Activated CD4-positive, alpha-beta T cell treated with anti-CD3 and anti-CD28 coated beads for 36 hours (primary cell): ENCODE measurements at regions of chr5 and their contacts with region 1.

Region 1: DNA sequence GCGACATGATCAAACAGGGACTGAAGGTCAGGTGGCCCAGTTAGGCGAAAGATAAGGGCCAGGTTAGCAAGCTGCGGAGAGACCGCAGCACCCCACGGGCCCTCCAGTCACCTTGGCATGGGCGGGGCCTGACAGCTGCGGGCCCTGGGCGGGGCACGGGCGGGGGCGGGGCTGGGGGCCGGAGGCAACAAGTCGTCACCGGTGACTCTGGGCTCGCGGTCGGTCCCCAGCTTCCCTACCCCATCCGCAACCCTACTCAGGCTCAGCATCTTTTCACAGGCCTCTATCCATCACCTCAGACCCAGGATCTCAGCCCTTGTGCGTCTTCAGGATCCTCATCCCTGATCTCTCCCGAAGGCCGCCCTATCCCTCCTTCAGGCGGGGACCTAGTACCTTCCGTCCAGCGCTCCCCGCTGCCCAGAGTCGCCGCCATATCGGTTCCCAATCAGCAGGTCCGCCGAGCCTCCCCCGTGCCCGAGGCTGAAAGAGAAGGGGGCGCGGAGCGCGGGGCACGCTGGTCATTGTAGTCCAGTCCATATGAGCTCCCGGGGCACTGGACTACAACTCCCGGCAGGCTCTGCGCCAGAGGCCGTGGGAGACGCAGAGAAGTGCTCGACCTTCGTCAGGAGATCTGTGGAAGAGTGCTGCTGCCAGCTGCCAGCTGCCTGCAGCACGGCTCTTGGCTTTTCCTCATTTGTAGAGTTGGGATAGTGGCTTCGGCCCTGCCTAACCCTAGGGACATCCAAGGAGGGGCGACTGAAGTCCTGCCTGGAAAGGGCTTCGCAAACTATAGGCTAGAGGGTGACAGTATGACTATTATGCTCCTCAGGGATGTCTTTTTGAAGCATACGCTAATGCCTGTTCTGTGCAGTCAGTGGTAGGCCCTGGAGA is at the start of gene DNAJC18:
- DNase-seq: peak; percentile 97
- ATAC-seq: peak; percentile 86
- H3K4me3 Mint-ChIP-seq: peak within 1 kb of the TSS; percentile 94
- H3K27ac Mint-ChIP-seq: peak within 1 kb of the TSS; percentile 99
- H3K4me1 Mint-ChIP-seq: peaks cover 55% of the 10 kb centered on the region
- H3K27me3 Mint-ChIP-seq: no peaks in the 10 kb centered on the region
- total RNA-seq, gene DNAJC18: 33.1 to 35.6 TPM

Region 2: GRCh38 chr5:139354186-139354585 is 85.1 kb before region 1 on chr5:
- CTCF ChIA-PET with region 1: no interaction called
- POLR2A ChIA-PET with region 1: no interaction called
- intact Hi-C with region 1: no loop called
- DNase-seq: no peak
- ATAC-seq: no peak
- H3K4me3 Mint-ChIP-seq: no peak overlapping the region
- H3K27ac Mint-ChIP-seq: no peak overlapping the region
- H3K4me1 Mint-ChIP-seq: peaks cover 28% of the 10 kb centered on the region
- H3K27me3 Mint-ChIP-seq: no peaks in the 10 kb centered on the region

Region 3: GRCh38 chr5:139392678-139393496 is 46.4 kb before region 1 on chr5:
- CTCF ChIA-PET with region 1: no interaction called
- POLR2A ChIA-PET with region 1: no interaction called
- intact Hi-C with region 1: loop called in 1 of 2 experiments (anchors 1 kb)
- DNase-seq: peak; percentile 93
- ATAC-seq: peak; percentile 67
- H3K4me3 Mint-ChIP-seq: peak overlapping the region; percentile 78
- H3K27ac Mint-ChIP-seq: peak overlapping the region; percentile 85
- H3K4me1 Mint-ChIP-seq: peaks cover 40% of the 10 kb centered on the region
- H3K27me3 Mint-ChIP-seq: no peaks in the 10 kb centered on the region

Region 4: GRCh38 chr5:139417214-139417613 is 22.0 kb before region 1 on chr5:
- CTCF ChIA-PET with region 1: interaction called, 18 read pairs
- POLR2A ChIA-PET with region 1: interaction called, 7 read pairs
- intact Hi-C with region 1: loop called in 1 of 2 experiments (anchors 1 kb)
- DNase-seq: no peak
- ATAC-seq: no peak
- H3K4me3 Mint-ChIP-seq: no peak overlapping the region
- H3K27ac Mint-ChIP-seq: peak overlapping the region; percentile 98
- H3K4me1 Mint-ChIP-seq: peaks cover 50% of the 10 kb centered on the region
- H3K27me3 Mint-ChIP-seq: no peaks in the 10 kb centered on the region

Region 5: GRCh38 chr5:139458580-139459406 is 19.5 kb after region 1 on chr5:
- CTCF ChIA-PET with region 1: interaction called, 4 read pairs
- POLR2A ChIA-PET with region 1: interaction called, 18 read pairs
- intact Hi-C with region 1: loop called (anchors 1 kb)
- DNase-seq: peak; percentile 90
- ATAC-seq: peak; percentile 91
- H3K4me3 Mint-ChIP-seq: peak overlapping the region; percentile 57
- H3K27ac Mint-ChIP-seq: peak overlapping the region; percentile 94
- H3K4me1 Mint-ChIP-seq: peaks cover 64% of the 10 kb centered on the region
- H3K27me3 Mint-ChIP-seq: no peaks in the 10 kb centered on the region

Region 6: GRCh38 chr5:139512786-139513390 is 73.6 kb after region 1 on chr5:
- CTCF ChIA-PET with region 1: interaction called, 21 read pairs
- POLR2A ChIA-PET with region 1: no interaction called
- intact Hi-C with region 1: loop called in 1 of 2 experiments (anchors 1 kb)
- DNase-seq: peak; percentile 15
- ATAC-seq: no peak
- H3K4me3 Mint-ChIP-seq: no peak overlapping the region
- H3K27ac Mint-ChIP-seq: peak overlapping the region; percentile 16
- H3K4me1 Mint-ChIP-seq: peaks cover 55% of the 10 kb centered on the region
- H3K27me3 Mint-ChIP-seq: no peaks in the 10 kb centered on the region

Region 7: GRCh38 chr5:139574641-139575312 is 135.5 kb after region 1 on chr5:
- CTCF ChIA-PET with region 1: no interaction called
- POLR2A ChIA-PET with region 1: no interaction called
- intact Hi-C with region 1: loop called in 1 of 2 experiments (anchors 5 kb)
- DNase-seq: no peak
- ATAC-seq: peak; percentile 23
- H3K4me3 Mint-ChIP-seq: no peak overlapping the region
- H3K27ac Mint-ChIP-seq: no peak overlapping the region
- H3K4me1 Mint-ChIP-seq: peaks cover 79% of the 10 kb centered on the region
- H3K27me3 Mint-ChIP-seq: no peaks in the 10 kb centered on the region